Activated B cell treated with CpG ODN at 0.5 μM for 24 hours (primary cell): ENCODE measurements at regions of chr1 and their contacts with region 1.

Region 1: GRCh38 chr1:9823943-9824701 is at the start of gene CLSTN1:
- DNase-seq: peak; percentile 82
- ATAC-seq: peak; percentile 82
- H3K4me3 Mint-ChIP-seq: peak within 1 kb of the TSS; percentile 92
- H3K27ac Mint-ChIP-seq: peak within 1 kb of the TSS; percentile 82
- H3K4me1 Mint-ChIP-seq: peaks cover 55% of the 10 kb centered on the region
- H3K27me3 Mint-ChIP-seq: no peaks in the 10 kb centered on the region
- CTCF ChIP-seq: no peak
- total RNA-seq, gene CLSTN1: 50.7 and 52.2 TPM in 2 replicates

Region 2: GRCh38 chr1:9150582-9151327 is 673.4 kb before region 1 on chr1:
- CTCF ChIA-PET with region 1: no interaction called
- POLR2A ChIA-PET with region 1: no interaction called
- intact Hi-C with region 1: no loop called
- DNase-seq: no peak
- ATAC-seq: no peak
- H3K4me3 Mint-ChIP-seq: no peak overlapping the region
- H3K27ac Mint-ChIP-seq: no peak overlapping the region
- H3K4me1 Mint-ChIP-seq: no peaks in the 10 kb centered on the region
- H3K27me3 Mint-ChIP-seq: no peaks in the 10 kb centered on the region
- CTCF ChIP-seq: no peak

Region 3: DNA sequence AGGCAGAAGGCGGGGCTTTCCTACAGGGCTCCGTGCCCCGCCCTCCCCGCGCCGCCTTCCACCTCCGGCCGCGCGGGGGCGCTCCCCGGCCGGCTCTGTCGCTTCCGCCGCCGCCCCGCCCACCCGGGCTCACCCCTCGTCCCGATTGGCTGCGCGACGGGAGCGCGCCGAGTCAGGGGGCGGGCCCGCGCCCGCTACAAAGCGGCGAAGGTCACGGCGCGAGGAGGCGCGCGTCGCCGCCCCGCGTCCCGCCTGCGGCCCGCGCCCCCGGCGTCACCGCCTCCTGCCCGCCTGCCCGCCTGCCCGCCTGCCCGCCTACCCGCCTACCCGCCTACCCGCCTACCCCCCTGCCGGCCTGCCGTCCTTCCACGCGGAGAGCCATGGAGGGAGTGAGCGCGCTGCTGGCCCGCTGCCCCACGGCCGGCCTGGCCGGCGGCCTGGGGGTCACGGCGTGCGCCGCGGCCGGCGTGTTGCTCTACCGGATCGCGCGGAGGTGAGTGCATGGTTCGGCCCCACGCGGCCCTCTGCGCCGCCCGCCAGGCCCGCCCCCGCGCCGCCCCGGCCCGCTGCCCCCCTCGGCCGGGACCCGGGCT is 235.5 kb before region 1 on chr1 and contains the start of gene TMEM201:
- CTCF ChIA-PET with region 1: no interaction called
- POLR2A ChIA-PET with region 1: no interaction called
- intact Hi-C with region 1: loop called (anchors 1 kb)
- DNase-seq: peak; percentile 98
- ATAC-seq: peak; percentile 91
- H3K4me3 Mint-ChIP-seq: peak within 1 kb of the TSS; percentile 84
- H3K27ac Mint-ChIP-seq: peak within 1 kb of the TSS; percentile 12
- H3K4me1 Mint-ChIP-seq: peaks cover 38% of the 10 kb centered on the region
- H3K27me3 Mint-ChIP-seq: no peaks in the 10 kb centered on the region
- CTCF ChIP-seq: no peak
- total RNA-seq, gene TMEM201: 8.1 and 9.4 TPM in 2 replicates

Region 4: GRCh38 chr1:9793291-9793690 is 30.8 kb before region 1 on chr1:
- CTCF ChIA-PET with region 1: no interaction called
- POLR2A ChIA-PET with region 1: no interaction called
- intact Hi-C with region 1: no loop called
- DNase-seq: no peak
- ATAC-seq: no peak
- H3K4me3 Mint-ChIP-seq: no peak overlapping the region
- H3K27ac Mint-ChIP-seq: no peak overlapping the region
- H3K4me1 Mint-ChIP-seq: peaks cover 27% of the 10 kb centered on the region
- H3K27me3 Mint-ChIP-seq: no peaks in the 10 kb centered on the region
- CTCF ChIP-seq: no peak

Region 5: DNA sequence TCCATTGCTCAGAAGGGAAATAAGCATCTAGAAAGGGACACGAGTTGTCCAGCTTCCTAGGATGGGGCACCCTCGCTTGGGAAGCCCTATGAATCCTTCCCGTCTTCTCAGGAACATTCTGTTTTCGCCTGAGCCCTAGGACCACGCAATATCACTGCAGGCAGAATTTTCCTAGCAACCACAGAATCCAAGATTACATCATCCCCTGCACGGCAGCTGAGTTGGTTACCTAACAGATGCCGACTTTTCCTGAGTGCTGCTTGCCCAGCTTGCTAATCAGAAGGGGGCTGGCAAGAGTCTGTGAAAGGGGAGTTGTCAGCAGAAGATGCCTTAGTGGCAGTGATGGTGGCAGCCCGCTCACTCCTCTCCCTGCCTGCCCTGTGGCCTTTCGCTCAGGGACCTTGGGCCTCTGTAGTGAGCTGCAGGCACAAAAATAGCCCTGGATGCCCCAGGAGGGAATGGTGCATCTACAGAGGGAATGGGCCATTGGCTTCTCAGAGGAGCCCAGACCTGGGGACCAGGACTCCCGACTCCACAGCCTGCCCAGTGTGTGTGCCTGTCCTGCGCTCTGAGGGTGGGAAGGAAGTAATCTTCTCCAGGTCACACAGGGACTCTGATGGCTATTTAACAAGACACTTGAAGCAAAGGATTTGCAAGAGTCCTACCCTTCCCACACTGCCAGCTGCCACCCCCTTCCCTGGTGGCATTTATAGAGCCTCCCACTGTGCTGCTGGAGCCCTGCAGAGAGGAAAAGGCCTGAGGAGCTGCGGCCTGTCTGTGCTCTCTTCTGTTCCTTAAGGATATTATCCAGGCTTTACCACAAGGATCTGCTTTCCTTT is 28.5 kb after region 1 on chr1:
- CTCF ChIA-PET with region 1: interaction called, 3 read pairs
- POLR2A ChIA-PET with region 1: interaction called, 7 read pairs
- intact Hi-C with region 1: loop called (anchors 2 kb)
- DNase-seq: no peak
- ATAC-seq: no peak
- H3K4me3 Mint-ChIP-seq: no peak overlapping the region
- H3K27ac Mint-ChIP-seq: no peak overlapping the region
- H3K4me1 Mint-ChIP-seq: peaks cover 31% of the 10 kb centered on the region
- H3K27me3 Mint-ChIP-seq: no peaks in the 10 kb centered on the region
- CTCF ChIP-seq: no peak

Region 6: GRCh38 chr1:10032590-10033358 is 208.7 kb after region 1 on chr1 and contains the start of gene UBE4B:
- CTCF ChIA-PET with region 1: no interaction called
- POLR2A ChIA-PET with region 1: no interaction called
- intact Hi-C with region 1: no loop called
- DNase-seq: peak; percentile 99
- ATAC-seq: peak; percentile 96
- H3K4me3 Mint-ChIP-seq: peak within 1 kb of the TSS; percentile 96
- H3K27ac Mint-ChIP-seq: peak within 1 kb of the TSS; percentile 93
- H3K4me1 Mint-ChIP-seq: peaks cover 24% of the 10 kb centered on the region
- H3K27me3 Mint-ChIP-seq: no peaks in the 10 kb centered on the region
- CTCF ChIP-seq: peak; percentile 55
- total RNA-seq, gene UBE4B: 41.1 and 44.7 TPM in 2 replicates